Left lung (tissue), 14 donors: ENCODE measurements at regions of chrX and their contacts with region 1.

Region 1: GRCh38 chrX:103697687-103698086 is 11.2 kb upstream of the MORF4L2 start:
- DNase-seq: no peak
- ATAC-seq: no peak
- H3K4me3 ChIP-seq: no peak overlapping the region
- H3K27ac ChIP-seq: no peak overlapping the region
- H3K4me1 ChIP-seq: no peaks in the 10 kb centered on the region
- H3K27me3 ChIP-seq: no peaks in the 10 kb centered on the region
- CTCF ChIP-seq: no peak

Region 2: DNA sequence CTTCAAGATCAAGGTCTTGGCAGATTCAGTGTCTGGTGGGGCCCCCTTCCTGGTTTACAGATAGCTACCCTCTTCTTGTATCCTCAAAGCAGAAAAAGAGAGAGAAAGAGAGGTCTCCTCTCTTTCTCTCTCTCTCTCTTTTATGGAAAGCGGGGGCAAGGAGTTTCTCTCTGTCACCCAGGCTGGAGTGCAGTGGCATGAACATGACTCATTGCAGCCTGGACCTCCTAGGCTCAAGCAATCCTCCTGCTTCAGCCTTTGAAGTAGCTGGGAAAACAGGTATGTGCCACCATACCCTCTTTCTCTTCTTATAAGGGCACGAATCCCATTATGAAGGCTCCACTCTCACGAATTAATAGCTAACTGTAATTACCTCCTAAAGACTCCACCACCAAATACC is 114.2 kb after region 1 on chrX:
- intact Hi-C with region 1: no loop called
- DNase-seq: no peak
- ATAC-seq: no peak
- H3K4me3 ChIP-seq: no peak overlapping the region
- H3K27ac ChIP-seq: no peak overlapping the region
- H3K4me1 ChIP-seq: no peaks in the 10 kb centered on the region
- H3K27me3 ChIP-seq: no peaks in the 10 kb centered on the region
- CTCF ChIP-seq: no peak

Region 3: GRCh38 chrX:103823591-103823990 is 125.9 kb after region 1 on chrX:
- intact Hi-C with region 1: loop called in 1 of 2 experiments (anchors 10 kb)
- DNase-seq: no peak
- ATAC-seq: no peak
- H3K4me3 ChIP-seq: no peak overlapping the region
- H3K27ac ChIP-seq: no peak overlapping the region
- H3K4me1 ChIP-seq: no peaks in the 10 kb centered on the region
- H3K27me3 ChIP-seq: peaks cover 0 to 5% of the 10 kb centered on the region in 2 donors
- CTCF ChIP-seq: no peak